Ascending aorta (tissue), 2 donors: ENCODE measurements at regions of chr2 and their contacts with region 1.

Region 1: GRCh38 chr2:143171532-143172216 is 42.5 kb downstream of the ARHGAP15 start:
- DNase-seq: no peak
- H3K4me3 ChIP-seq: no peak overlapping the region
- H3K27ac ChIP-seq: no peak overlapping the region
- H3K4me1 ChIP-seq: no peaks in the 10 kb centered on the region
- H3K27me3 ChIP-seq: no peaks in the 10 kb centered on the region
- CTCF ChIP-seq: no peak

Region 2: GRCh38 chr2:143150287-143150686 is 21.4 kb before region 1 on chr2:
- intact Hi-C with region 1: no loop called
- DNase-seq: no peak
- H3K4me3 ChIP-seq: no peak overlapping the region
- H3K27ac ChIP-seq: no peak overlapping the region
- H3K4me1 ChIP-seq: no peaks in the 10 kb centered on the region
- H3K27me3 ChIP-seq: no peaks in the 10 kb centered on the region
- CTCF ChIP-seq: no peak

Region 3: DNA sequence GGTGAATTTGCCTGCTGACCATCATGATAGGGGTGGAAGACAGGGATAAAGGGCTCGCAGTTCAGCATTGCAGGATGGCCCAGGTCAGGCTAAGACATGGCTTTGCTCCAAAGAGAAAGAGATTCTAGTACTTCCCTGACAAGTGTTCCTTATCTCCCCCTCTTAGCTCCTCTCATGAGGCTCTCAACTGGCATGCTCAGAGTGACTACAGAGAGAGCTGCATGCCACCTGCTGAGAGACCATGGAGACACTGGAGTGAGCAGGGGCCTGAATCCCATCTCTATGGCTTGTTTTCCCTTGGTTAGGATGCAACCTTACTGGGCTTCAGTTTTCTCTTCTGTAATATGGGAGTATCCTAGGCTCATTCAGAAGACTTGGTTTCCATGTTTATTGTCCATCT is 51.9 kb after region 1 on chr2:
- intact Hi-C with region 1: loop called (anchors 5 kb)
- DNase-seq: no peak
- H3K4me3 ChIP-seq: no peak overlapping the region
- H3K27ac ChIP-seq: no peak overlapping the region
- H3K4me1 ChIP-seq: no peaks in the 10 kb centered on the region
- H3K27me3 ChIP-seq: no peaks in the 10 kb centered on the region
- CTCF ChIP-seq: no peak

Region 4: DNA sequence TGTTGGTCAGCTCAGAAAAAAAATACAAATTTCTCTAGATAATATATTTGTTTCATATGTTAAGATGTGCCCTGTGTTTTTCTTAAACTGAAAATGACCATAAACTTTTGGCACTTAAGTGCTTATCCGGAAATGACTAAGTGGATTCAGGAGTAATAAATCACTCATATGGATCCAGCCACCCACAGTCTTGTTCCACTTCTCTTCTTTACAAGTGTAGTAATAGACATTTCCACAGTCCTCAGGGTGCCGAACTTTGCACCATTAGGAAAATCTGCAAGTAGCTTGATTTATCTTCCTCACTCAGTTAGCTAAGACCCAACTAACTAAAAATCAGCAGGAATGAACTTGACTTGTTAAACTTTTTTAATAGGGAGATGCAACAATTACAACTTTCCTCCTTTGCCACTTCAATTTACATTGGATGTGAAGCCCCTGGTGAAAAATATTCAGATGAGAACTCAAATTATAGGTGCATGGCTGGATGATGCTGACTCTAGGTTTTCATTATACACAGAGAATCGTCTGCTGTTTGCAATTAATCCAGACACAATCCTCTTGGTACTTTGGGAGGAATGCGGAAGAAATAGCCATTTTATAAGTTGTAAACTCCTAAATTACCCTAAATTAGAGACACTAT is 280.1 kb after region 1 on chr2:
- intact Hi-C with region 1: no loop called
- DNase-seq: no peak
- H3K4me3 ChIP-seq: no peak overlapping the region
- H3K27ac ChIP-seq: no peak overlapping the region
- H3K4me1 ChIP-seq: no peaks in the 10 kb centered on the region
- H3K27me3 ChIP-seq: no peaks in the 10 kb centered on the region
- CTCF ChIP-seq: no peak